ENCODE measurements at regions of chr1 and their contacts with region 1.

Region 1: GRCh38 chr1:87155170-87155569 is 173.5 kb upstream of the LMO4 start:
- DNase-seq: no peak
- H3K4me3 ChIP-seq: no peak overlapping the region
- H3K27ac ChIP-seq: no peak overlapping the region
- H3K4me1 ChIP-seq: peaks cover 6 to 29% (median 21%) of the 10 kb centered on the region in 4 experiments
- H3K27me3 ChIP-seq: no peaks in the 10 kb centered on the region

Region 2: DNA sequence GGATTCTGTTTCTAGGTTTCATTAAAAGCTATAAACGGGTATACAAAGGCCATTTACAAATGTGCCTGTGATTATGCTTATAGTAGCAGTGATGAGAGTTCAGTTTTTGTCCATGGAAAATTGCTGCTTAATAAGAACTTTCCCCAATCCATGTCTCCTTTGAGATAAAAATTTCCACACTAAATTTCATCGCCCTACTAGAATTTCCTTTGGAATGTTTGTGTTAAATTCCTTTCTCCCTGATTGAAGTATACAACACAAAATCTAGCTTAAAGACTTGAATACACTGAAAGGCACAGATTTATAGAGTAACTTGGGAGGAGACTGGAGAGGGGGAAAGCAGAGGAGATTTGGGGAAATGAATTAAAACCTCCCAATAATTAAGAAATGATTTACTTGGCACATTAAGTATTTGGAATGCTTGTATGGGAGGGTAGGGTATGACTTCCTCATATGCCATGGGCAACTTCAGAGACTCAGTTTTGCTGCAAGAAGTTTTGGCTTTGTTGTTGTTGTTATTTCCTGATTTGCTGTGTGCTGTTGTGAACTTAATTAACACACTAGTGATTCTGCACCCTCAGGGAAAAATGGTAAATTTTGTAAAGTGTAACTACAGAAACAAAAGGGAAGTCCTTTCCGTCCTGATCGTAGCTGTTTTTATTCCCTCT is 15.9 kb after region 1 on chr1:
- CTCF ChIA-PET with region 1: interaction called, 14 read pairs
- POLR2A ChIA-PET with region 1: no interaction called
- DNase-seq: no peak
- H3K4me3 ChIP-seq: no peak overlapping the region
- H3K27ac ChIP-seq: no peak overlapping the region
- H3K4me1 ChIP-seq: no peaks in the 10 kb centered on the region
- H3K27me3 ChIP-seq: no peaks in the 10 kb centered on the region

Region 3: GRCh38 chr1:87219626-87220225 is 64.6 kb after region 1 on chr1:
- CTCF ChIA-PET with region 1: no interaction called
- POLR2A ChIA-PET with region 1: no interaction called
- DNase-seq: no peak
- H3K4me3 ChIP-seq: no peak overlapping the region
- H3K27ac ChIP-seq: no peak overlapping the region
- H3K4me1 ChIP-seq: peaks cover 0 to 10% (median 0%) of the 10 kb centered on the region in 4 experiments
- H3K27me3 ChIP-seq: no peaks in the 10 kb centered on the region

Measured in common myeloid progenitor, CD34-positive (primary cell).